Mammary epithelial cell (primary cell): ENCODE measurements at regions of chr4 and their contacts with region 1.

Region 1: DNA sequence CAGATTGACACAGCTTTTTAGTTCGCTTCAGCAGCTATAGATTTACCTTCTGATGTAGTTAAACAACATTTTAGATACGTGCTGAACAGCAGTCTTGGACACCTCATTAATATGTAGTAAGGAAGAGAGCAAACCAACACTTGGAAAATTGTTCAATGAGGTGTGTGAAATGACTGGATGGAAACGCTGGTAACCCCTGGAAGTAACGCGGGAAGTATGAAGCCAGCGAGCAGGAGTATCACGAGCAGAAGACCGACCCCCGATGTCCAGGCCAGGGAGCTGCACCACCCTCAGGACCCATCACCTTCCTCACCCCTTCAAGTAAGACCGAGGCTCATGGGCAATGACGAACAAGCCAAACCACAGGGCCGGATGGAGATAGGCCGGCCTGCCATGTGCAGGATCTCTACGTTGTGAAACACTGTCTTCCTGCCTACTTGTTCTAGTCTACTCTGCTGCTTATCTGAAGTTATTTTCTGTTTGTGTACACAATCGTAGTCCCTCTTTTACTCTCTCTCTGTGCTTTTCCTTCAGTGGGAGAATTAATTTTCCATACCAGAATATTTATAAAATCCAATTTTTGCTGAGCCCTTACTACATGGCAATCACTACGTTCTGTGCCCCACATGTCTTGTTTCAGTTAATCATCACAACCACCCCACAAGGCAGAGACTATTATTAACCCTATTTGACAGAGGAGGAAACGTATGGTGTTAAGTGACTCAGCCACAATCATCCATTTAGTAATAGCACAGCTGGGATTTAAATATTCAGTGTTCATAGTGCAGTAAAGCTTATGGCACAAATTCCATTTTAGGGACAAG is 221.7 kb downstream of the APBB2 start:
- DNase-seq: peak; percentile 79
- H3K4me3 ChIP-seq: no peak overlapping the region
- H3K27ac ChIP-seq: peak overlapping the region; percentile 97
- H3K4me1 ChIP-seq: peaks cover 57% of the 10 kb centered on the region
- H3K27me3 ChIP-seq: no peaks in the 10 kb centered on the region
- CTCF ChIP-seq: no peak

Region 2: DNA sequence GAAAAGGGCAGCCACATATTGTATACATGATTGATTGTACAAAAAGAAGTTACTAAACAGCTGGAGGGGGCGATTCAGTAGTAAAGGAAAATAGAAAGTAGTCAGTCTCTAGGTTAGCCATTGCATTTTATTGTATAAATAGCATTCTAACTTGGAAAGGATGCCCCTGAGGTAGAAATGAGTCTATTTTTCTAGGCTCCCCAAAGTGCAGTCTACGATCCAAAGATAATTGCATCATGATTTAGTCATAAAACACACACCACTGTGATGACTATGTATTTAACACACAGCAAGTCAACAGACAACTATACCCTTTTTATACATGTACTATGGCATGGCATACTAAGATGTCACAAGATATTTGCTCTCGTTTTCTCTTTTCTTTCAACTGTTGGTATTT is 16.7 kb after region 1 on chr4:
- CTCF ChIA-PET with region 1: no interaction called
- dilution Hi-C with region 1: no loop called
- in situ Hi-C with region 1: no loop called
- intact Hi-C with region 1: loop called (anchors 2 kb)
- DNase-seq: peak; percentile 73
- H3K4me3 ChIP-seq: no peak overlapping the region
- H3K27ac ChIP-seq: peak overlapping the region; percentile 53
- H3K4me1 ChIP-seq: peaks cover 18% of the 10 kb centered on the region
- H3K27me3 ChIP-seq: no peaks in the 10 kb centered on the region
- CTCF ChIP-seq: no peak

Region 3: DNA sequence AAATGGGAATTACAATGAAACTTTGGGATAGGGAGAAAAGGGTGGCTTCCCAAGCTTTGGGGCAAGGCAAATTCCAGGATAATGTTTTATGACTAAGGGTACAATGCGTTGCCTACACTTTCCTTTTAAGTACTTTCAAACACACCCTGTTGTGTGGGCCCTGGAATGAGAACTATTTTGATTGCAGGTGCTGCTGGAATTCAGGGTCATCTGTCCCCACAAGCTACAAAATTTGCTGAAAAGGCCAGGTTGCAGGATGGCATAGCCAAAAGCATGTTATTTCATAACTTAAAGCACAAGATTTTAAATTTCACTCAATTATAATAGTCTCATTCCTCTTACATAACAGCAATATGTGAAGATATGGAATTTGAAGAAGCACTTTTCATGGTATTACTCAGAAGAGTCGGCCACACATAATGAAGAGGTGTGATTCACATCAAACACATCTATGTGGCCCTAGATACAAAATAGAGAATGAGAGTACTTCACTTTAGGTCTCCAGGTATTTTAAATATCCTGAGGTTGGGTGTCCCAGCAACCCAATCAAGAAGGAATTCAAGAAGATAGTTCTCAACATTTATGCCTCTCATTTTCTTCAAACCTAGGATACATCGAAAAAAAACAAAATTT is 132.3 kb after region 1 on chr4:
- CTCF ChIA-PET with region 1: no interaction called
- dilution Hi-C with region 1: no loop called
- in situ Hi-C with region 1: no loop called
- intact Hi-C with region 1: loop called (anchors 5 kb)
- DNase-seq: peak; percentile 63
- H3K4me3 ChIP-seq: no peak overlapping the region
- H3K27ac ChIP-seq: peak overlapping the region; percentile 96
- H3K4me1 ChIP-seq: peaks cover 43% of the 10 kb centered on the region
- H3K27me3 ChIP-seq: no peaks in the 10 kb centered on the region
- CTCF ChIP-seq: no peak

Region 4: DNA sequence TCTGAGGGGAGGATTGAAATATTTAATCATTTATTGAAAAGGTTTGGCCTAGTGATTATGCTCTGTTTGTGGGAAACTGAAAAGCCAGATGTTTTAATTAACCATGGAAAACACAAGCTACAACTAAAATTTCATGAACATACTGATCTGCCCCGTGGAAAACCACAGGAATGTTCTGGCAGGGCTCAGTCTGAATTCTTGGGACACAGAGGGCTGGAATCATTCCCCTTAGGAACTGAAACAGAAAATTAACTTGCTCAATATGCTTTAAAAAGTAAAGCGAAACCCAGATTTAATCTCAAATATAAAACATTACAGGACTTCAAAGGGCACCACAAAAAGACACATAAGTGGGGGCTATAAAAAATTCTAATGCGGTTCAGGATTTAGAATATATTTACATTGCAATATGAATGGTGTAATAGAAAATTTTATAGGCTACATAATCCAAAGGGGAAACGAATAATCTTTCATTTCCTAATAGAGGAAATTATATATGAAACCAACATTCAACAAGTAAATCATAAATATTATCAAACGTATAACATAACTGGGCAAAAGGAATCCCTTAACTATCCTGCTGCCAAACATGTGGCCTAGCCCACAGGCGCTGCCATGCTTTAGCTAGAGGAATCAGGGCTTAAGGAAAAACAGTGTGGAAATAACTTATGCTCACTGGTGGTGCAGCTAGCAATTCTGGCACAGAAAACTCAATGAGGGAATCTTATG is 150.8 kb after region 1 on chr4:
- CTCF ChIA-PET with region 1: no interaction called
- dilution Hi-C with region 1: no loop called
- in situ Hi-C with region 1: no loop called
- intact Hi-C with region 1: loop called (anchors 5 kb)
- DNase-seq: peak; percentile 75
- H3K4me3 ChIP-seq: peak overlapping the region in 2 of 3 experiments; percentile 2 to 19
- H3K27ac ChIP-seq: peak overlapping the region; percentile 98
- H3K4me1 ChIP-seq: peaks cover 69% of the 10 kb centered on the region
- H3K27me3 ChIP-seq: no peaks in the 10 kb centered on the region
- CTCF ChIP-seq: no peak